ENCODE measurements at regions of chr7 and their contacts with region 1.

Region 1: GRCh38 chr7:86926732-86927131 is 132.7 kb downstream of the ELAPOR2 start:
- DNase-seq: peak in 6 of 7 donors; percentile 19 to 57 (median 38)
- H3K4me3 ChIP-seq: no peak overlapping the region
- H3K27ac ChIP-seq: no peak overlapping the region
- H3K4me1 ChIP-seq: no peaks in the 10 kb centered on the region
- H3K27me3 ChIP-seq: no peaks in the 10 kb centered on the region
- CTCF ChIP-seq: peak; percentile 43 to 73 (median 61)
- POLR2A ChIP-seq: no peak

Region 2: DNA sequence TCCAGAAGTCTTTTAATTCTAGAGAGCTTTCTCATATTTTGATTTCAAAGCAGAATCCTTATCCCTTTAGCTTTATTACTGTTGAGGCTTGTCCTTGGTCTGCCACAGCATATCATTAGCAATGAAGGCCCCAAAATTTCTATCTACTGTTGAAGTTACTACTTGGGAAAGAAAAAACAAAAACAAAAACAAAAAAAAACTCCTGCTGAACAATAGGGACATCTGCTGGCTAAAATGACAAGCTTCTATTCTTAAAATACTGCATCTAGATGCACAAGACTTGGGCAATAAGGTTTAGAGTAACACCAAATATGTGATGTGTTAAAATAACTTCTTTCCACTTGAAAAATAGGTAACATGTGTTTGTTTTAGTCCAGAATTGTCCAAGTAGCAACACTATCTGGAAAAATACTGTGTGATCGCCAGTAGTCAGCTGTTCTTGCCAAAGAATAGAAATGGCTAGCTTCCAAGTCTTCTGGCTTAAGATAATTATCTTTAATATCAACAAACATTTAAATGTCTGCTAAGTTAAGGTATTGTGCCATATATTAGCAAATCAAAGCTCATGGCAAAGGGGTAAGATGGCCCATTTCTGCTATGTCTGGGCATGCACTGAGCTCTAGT is 221.7 kb after region 1 on chr7:
- intact Hi-C with region 1: loop called in 1 of 2 experiments (anchors 5 kb)
- DNase-seq: no peak
- H3K4me3 ChIP-seq: no peak overlapping the region
- H3K27ac ChIP-seq: no peak overlapping the region
- H3K4me1 ChIP-seq: peaks cover under 1 to 7% of the 10 kb centered on the region in 2 donors
- H3K27me3 ChIP-seq: no peaks in the 10 kb centered on the region
- CTCF ChIP-seq: peak; percentile 52 to 94 (median 66)
- POLR2A ChIP-seq: no peak

Region 3: DNA sequence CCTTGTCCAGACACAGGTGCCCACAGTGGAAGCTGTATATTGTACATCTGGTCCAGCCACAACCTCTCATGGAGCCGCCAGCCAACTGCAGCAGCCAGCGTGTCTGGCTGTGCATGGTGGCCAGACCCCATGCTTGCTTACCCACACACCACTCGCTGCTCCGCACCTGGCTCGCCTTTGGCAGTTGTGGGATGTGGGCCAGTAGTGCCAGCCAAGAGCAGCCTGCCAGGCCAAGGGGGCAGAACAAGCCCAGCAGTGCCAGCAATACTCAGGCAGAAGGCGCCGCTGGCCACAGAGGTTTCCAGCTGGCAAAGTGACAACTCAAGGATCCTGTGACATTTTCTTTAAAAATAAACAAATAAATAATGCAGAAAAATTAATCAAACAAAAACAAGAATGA is 304.5 kb after region 1 on chr7:
- intact Hi-C with region 1: loop called (anchors 5 to 10 kb)
- DNase-seq: peak in 1 of 7 donors; percentile 2
- H3K4me3 ChIP-seq: no peak overlapping the region
- H3K27ac ChIP-seq: no peak overlapping the region
- H3K4me1 ChIP-seq: no peaks in the 10 kb centered on the region
- H3K27me3 ChIP-seq: no peaks in the 10 kb centered on the region
- CTCF ChIP-seq: no peak
- POLR2A ChIP-seq: no peak